Endothelial cell of umbilical vein (primary cell): ENCODE measurements at regions of chr20 and their contacts with region 1.

Region 1: DNA sequence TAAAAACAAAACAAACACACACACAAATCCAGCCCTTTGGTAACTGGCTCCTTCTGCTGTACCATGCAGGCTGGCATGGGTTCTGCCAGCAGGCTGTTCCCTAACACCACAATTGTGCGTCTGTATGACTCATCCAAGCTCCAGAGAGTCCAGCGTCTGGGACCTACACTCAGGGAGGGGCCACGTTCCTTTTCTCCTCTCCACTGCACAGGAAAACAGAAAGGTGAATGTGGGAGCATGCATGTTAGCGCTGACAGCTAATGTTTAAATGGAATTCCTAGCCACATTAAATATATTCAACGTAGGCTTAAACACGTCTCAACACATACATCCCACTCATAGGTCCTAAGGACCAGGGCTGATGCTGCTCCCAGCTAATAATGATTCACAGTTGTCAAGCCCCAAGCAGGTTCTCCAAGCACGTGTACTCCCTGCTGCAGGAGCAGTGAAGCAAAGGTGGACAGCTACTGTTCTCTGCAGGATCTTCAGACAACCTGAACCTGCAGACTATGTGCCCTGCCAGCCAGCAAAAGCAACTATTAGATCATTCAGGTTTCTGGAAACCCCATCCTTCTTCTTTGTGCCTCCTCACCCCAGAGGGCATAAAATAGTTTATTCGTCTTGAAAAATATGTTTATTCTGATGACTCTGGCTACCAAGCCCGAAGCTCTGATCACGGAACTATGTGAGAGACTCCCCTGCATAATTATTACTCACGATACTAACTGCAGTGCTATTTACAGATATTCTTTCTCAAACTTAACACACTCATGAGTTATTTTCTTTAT is 20.9 kb downstream of the MAP1LC3A start:
- DNase-seq: peak; percentile 83
- H3K4me3 ChIP-seq: no peak overlapping the region
- H3K27ac ChIP-seq: no peak overlapping the region
- H3K4me1 ChIP-seq: peaks cover 14% of the 10 kb centered on the region
- H3K27me3 ChIP-seq: no peaks in the 10 kb centered on the region
- CTCF ChIP-seq: peak; percentile 74 to 77
- POLR2A ChIP-seq: no peak

Region 2: GRCh38 chr20:34318609-34319443 is 260.6 kb before region 1 on chr20:
- CTCF ChIA-PET with region 1: no interaction called
- POLR2A ChIA-PET with region 1: no interaction called
- dilution Hi-C with region 1: no loop called
- intact Hi-C with region 1: no loop called
- DNase-seq: no peak
- H3K4me3 ChIP-seq: no peak overlapping the region
- H3K27ac ChIP-seq: no peak overlapping the region
- H3K4me1 ChIP-seq: peaks cover 5% of the 10 kb centered on the region
- H3K27me3 ChIP-seq: no peaks in the 10 kb centered on the region
- CTCF ChIP-seq: no peak
- POLR2A ChIP-seq: no peak

Region 3: DNA sequence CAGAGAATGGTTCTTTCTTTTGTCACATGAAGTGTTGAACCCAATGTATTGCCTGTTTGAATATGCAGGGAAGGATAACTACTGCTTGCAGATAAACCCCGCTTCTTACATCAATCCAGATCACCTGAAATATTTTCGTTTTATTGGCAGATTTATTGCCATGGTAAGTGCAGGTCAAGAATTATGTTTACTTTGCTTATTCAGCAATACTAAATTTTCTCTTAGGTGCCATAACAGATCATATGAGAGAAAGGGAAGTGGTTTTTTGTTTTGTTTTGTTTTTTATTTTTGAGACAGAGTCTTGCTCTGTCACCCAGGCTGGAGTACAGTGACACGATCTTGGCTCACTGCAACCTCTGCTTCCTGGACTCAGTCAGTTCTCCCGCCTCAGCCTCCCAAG is 99.8 kb before region 1 on chr20:
- CTCF ChIA-PET with region 1: no interaction called
- POLR2A ChIA-PET with region 1: no interaction called
- dilution Hi-C with region 1: no loop called
- intact Hi-C with region 1: no loop called
- DNase-seq: no peak
- H3K4me3 ChIP-seq: no peak overlapping the region
- H3K27ac ChIP-seq: no peak overlapping the region
- H3K4me1 ChIP-seq: peaks cover 6% of the 10 kb centered on the region
- H3K27me3 ChIP-seq: no peaks in the 10 kb centered on the region
- CTCF ChIP-seq: no peak
- POLR2A ChIP-seq: no peak

Region 4: DNA sequence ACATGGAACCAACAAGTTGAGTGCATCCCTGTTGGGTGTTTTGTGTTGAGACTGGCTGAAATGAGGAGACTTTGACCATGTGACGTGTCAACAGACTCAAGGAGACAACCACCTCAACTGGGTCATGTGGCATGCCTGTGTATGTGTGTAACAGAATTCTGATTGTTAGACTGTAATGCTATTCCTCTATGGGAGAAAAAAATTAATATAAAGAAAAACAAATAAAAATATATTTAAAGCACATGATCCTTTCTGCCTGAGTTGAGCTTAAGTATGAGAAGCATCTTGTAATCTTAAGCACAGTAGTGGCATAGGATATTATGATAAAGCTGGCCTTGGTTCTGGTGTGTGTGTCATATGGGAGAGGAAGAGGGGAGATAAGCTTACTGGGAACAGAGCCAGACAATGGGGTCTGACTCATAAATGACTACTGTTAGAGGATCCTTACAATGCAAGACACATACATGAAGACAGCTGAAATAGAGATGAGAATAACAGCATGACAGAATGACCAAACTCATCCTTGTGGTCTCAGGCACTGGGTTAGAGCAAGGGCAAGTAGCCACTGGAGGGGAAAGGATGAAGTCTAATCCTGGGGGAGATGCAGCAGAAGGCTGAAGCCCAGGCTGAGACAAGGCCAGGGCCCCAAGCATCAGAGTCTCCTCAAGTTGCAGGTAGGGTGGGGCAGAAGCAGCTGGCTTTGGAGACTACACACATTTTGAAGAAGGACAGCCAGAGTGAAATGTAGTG is 134.0 kb after region 1 on chr20:
- CTCF ChIA-PET with region 1: interaction called, 31 read pairs
- POLR2A ChIA-PET with region 1: no interaction called
- dilution Hi-C with region 1: no loop called
- intact Hi-C with region 1: loop called (anchors 1 kb)
- DNase-seq: peak; percentile 99
- H3K4me3 ChIP-seq: no peak overlapping the region
- H3K27ac ChIP-seq: peak overlapping the region; percentile 45
- H3K4me1 ChIP-seq: peaks cover 24% of the 10 kb centered on the region
- H3K27me3 ChIP-seq: no peaks in the 10 kb centered on the region
- CTCF ChIP-seq: no peak
- POLR2A ChIP-seq: peak; percentile 12

Region 5: DNA sequence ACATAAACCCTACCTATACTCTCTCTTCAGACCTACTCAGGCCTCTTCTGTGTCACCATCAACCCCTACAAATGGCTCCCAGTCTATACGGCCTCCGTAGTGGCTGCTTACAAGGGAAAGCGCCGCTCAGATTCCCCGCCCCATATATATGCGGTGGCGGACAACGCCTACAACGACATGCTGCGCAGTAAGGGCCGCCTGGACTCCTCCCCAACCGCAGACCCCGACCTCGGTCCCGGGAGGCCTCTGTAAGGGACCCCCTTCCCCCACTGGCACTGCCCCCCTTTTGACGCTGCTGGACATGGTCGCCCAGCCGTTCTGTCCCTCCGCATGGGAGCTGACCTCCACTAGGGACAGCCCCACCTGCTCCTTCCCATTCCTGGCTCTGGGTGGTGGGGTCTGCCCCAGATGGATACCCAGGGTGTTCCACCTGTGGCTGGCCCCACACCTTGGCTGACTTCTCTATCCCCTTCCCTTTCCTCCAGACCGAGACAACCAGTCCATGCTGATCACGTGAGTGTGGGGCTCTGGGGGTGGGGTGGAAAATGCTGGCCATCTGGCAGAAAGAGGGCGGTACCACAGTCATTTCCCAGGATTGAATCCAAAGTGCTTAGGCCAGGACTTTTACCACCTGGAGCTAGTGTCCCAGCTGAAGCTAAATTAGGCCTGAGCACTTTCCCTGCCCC is 401.3 kb after region 1 on chr20:
- CTCF ChIA-PET with region 1: no interaction called
- POLR2A ChIA-PET with region 1: no interaction called
- dilution Hi-C with region 1: no loop called
- intact Hi-C with region 1: no loop called
- DNase-seq: no peak
- H3K4me3 ChIP-seq: no peak overlapping the region
- H3K27ac ChIP-seq: no peak overlapping the region
- H3K4me1 ChIP-seq: no peaks in the 10 kb centered on the region
- H3K27me3 ChIP-seq: peaks cover 5% of the 10 kb centered on the region in 2 experiments
- CTCF ChIP-seq: no peak
- POLR2A ChIP-seq: no peak